ENCODE measurements at regions of chr1 and their contacts with region 1.

Region 1: DNA sequence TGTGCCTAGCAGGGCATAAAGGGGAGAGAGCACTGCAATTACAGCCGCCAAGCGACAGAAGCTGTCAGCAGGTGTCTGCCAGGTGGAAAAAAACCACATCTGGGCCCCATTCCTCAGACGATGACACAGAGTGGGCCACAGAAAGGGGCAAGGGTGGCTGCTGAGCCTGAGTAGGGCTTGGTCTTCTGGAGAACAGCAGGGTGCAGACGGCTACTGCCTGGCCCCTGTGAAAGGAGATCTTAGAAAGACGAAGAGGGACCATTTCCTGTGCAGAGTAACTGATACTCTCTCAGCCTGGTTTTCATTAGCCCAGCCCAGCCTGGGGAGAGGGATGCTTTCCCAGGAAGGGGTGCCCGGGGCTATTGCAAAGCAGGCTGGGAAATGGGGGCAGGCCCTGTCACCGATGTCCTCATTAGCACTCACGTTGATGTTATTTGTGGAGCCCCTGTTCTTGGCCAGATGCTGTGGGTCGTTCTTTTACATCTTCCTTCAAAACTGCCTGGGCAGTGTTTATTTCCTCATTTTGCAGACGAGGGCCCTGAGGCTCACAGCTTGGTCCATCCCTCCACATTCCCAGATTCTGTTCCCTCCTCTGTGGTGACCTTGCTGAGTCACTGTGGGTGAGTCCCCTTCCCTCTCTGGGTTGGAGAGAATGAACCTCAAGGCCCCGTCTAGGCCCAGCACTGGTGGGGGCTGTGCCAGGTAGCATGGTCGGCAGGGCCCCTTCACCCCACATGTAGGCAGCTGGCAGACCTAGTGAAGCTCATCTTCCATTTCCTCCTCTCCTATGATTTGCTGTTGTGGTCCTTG is 472.8 kb downstream of the PTPRU start:
- DNase-seq: peak; percentile 63
- H3K4me3 ChIP-seq: no peak overlapping the region
- H3K27ac ChIP-seq: peak overlapping the region; percentile 99
- H3K27me3 ChIP-seq: no peaks in the 10 kb centered on the region
- CTCF ChIP-seq: no peak

Region 2: GRCh38 chr1:29698033-29698432 is 11.1 kb before region 1 on chr1:
- CTCF ChIA-PET with region 1: interaction called, 43 read pairs
- POLR2A ChIA-PET with region 1: no interaction called
- DNase-seq: no peak
- H3K4me3 ChIP-seq: no peak overlapping the region
- H3K27ac ChIP-seq: no peak overlapping the region
- H3K27me3 ChIP-seq: peaks cover 2% of the 10 kb centered on the region
- CTCF ChIP-seq: peak; percentile 84

Region 3: GRCh38 chr1:30012455-30013440 is 303.6 kb after region 1 on chr1:
- CTCF ChIA-PET with region 1: no interaction called
- POLR2A ChIA-PET with region 1: no interaction called
- DNase-seq: no peak
- H3K4me3 ChIP-seq: no peak overlapping the region
- H3K27ac ChIP-seq: no peak overlapping the region
- H3K27me3 ChIP-seq: no peaks in the 10 kb centered on the region
- CTCF ChIP-seq: no peak